ENCODE measurements at regions of chr2 and their contacts with region 1.

Region 1: DNA sequence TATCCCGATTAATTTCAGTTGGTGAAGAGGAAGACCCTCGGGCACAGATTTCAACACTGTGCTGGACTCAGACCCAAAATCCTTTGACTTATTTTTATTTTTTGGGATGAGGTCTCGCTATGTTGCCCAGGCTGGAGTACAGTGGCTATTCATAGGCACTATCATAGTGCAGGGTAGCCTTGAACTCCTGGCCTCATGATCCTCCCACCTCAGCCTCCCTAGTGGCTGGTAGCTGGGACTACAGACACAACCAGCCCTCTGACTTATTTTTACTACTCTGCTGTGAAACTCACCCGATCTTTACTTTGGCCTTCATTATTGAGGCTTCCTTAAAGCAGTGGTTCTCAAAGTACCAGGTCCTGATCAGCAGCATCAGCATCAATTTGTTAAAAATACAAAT is 18.2 kb upstream of the ADAM17 start:
- DNase-seq: no peak
- ATAC-seq: peak; percentile 33
- H3K4me3 Mint-ChIP-seq: no peak overlapping the region
- H3K27ac Mint-ChIP-seq: no peak overlapping the region
- H3K4me1 Mint-ChIP-seq: peaks cover 19% of the 10 kb centered on the region
- H3K27me3 Mint-ChIP-seq: no peaks in the 10 kb centered on the region

Region 2: GRCh38 chr2:9333591-9334171 is 240.2 kb before region 1 on chr2:
- CTCF ChIA-PET with region 1: no interaction called
- POLR2A ChIA-PET with region 1: interaction called, 11 read pairs
- intact Hi-C with region 1: no loop called
- DNase-seq: peak; percentile 53
- ATAC-seq: peak; percentile 36
- H3K4me3 Mint-ChIP-seq: no peak overlapping the region
- H3K27ac Mint-ChIP-seq: no peak overlapping the region
- H3K4me1 Mint-ChIP-seq: peaks cover 19% of the 10 kb centered on the region
- H3K27me3 Mint-ChIP-seq: peaks cover 1% of the 10 kb centered on the region

Region 3: DNA sequence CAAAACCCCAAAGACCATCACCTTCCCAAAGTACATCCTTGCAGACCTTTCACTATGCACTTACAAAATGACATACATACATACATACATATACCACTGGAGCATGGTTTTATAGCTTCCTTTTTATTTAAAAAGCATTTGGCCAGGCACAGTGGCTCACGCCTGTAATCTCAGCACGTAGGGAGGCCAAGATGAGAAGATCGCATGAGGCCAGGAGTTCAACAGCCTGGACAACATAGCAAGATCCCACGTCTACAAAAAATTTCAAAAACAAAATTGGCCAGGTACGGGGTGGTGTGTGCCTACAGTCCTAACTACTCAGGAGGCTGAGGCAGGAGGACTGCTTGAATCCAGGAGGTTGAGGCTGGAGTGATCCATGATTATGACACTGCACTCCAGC is 11.6 kb after region 1 on chr2:
- CTCF ChIA-PET with region 1: interaction called, 5 read pairs
- POLR2A ChIA-PET with region 1: no interaction called
- intact Hi-C with region 1: loop called in 1 of 2 experiments (anchors 1 kb)
- DNase-seq: no peak
- ATAC-seq: no peak
- H3K4me3 Mint-ChIP-seq: no peak overlapping the region
- H3K27ac Mint-ChIP-seq: no peak overlapping the region
- H3K4me1 Mint-ChIP-seq: peaks cover 9% of the 10 kb centered on the region
- H3K27me3 Mint-ChIP-seq: no peaks in the 10 kb centered on the region

Region 4: DNA sequence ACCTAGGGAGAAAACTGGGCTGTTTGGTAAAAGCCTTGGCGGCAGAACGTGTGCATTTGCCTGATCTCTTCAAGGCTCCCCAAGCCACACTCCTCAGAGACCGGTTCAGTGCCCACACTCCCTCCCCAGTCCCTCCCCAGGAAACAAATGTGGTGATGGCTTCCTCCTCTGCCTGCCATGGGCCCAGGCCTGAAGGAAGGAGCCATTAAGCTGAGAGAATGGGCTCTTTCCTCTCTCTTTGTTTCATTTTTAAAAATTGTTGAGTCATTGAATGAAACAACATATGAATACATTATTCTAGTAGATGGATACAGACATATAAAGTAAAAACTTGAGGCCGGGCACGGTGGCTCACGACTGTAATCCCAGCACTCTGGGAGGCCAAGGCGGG is 107.6 kb after region 1 on chr2:
- CTCF ChIA-PET with region 1: no interaction called
- POLR2A ChIA-PET with region 1: no interaction called
- intact Hi-C with region 1: no loop called
- DNase-seq: peak; percentile 27
- ATAC-seq: peak; percentile 74
- H3K4me3 Mint-ChIP-seq: no peak overlapping the region
- H3K27ac Mint-ChIP-seq: peak overlapping the region; percentile 63
- H3K4me1 Mint-ChIP-seq: peaks cover 5% of the 10 kb centered on the region
- H3K27me3 Mint-ChIP-seq: no peaks in the 10 kb centered on the region

Measured in activated CD4-positive, alpha-beta T cell treated with anti-CD3 and anti-CD28 coated beads for 36 hours (primary cell).